Prostate gland (tissue), 2 donors: ENCODE measurements at regions of chr3 and their contacts with region 1.

Region 1: DNA sequence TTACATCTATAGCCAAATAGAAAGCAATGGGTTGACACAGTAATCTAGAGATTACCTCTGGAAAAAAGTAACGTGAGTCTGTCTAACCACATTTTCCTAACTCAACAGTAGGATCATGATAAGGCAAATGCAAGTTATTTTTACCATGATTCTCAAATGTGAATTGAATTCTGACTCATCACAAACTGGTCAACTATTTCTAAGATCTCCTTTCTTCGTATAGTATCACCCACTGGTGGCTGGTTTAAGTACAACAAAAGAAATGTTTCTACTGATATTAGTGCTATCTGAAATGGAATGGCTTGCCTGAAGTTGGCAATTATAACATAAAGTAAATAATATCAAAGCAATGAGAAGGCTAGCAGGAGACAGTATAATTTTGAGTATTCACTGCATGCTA is 102.2 kb downstream of the ABI3BP start:
- DNase-seq: no peak
- H3K4me3 ChIP-seq: no peak overlapping the region
- H3K27ac ChIP-seq: no peak overlapping the region
- H3K4me1 ChIP-seq: no peaks in the 10 kb centered on the region
- H3K27me3 ChIP-seq: no peaks in the 10 kb centered on the region
- CTCF ChIP-seq: no peak
- POLR2A ChIP-seq: no peak

Region 2: GRCh38 chr3:101195951-101196713 is 305.1 kb after region 1 on chr3:
- intact Hi-C with region 1: loop called (anchors 2 kb)
- DNase-seq: peak; percentile 23
- H3K4me3 ChIP-seq: no peak overlapping the region
- H3K27ac ChIP-seq: no peak overlapping the region
- H3K4me1 ChIP-seq: no peaks in the 10 kb centered on the region
- H3K27me3 ChIP-seq: no peaks in the 10 kb centered on the region
- CTCF ChIP-seq: peak; percentile 25 to 87 (median 74)
- POLR2A ChIP-seq: no peak